Activated CD4-positive, alpha-beta T cell treated with anti-CD3 and anti-CD28 coated beads for 36 hours (primary cell): ENCODE measurements at regions of chr18 and their contacts with region 1.

Region 1: DNA sequence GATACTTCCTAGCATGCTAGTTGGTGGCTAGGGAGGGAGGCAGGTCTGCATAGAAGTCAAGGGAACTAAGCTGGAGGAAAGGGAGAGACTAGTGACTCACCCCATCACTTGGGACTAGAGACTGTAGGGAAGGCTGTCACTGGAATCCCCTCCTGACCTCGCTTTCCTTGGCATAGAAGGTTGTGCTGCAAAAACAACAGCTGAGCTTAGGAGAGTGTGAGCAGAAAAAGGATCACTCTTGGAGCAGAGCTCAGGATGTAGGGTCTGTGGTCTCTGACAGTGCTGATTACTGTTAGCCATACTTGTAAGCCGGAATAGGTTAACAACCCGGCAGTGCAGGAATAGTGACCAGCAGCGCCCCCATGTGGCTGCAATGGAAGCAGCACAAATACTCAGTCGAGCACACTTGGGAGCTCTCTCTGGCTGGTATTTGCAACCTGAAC is 66.9 kb upstream of the SMAD2 start:
- DNase-seq: peak; percentile 71
- ATAC-seq: peak; percentile 39
- H3K4me3 Mint-ChIP-seq: no peak overlapping the region
- H3K27ac Mint-ChIP-seq: no peak overlapping the region
- H3K4me1 Mint-ChIP-seq: no peaks in the 10 kb centered on the region
- H3K27me3 Mint-ChIP-seq: no peaks in the 10 kb centered on the region

Region 2: GRCh38 chr18:47772374-47773248 is 224.7 kb before region 1 on chr18:
- CTCF ChIA-PET with region 1: interaction called, 24 read pairs
- POLR2A ChIA-PET with region 1: interaction called, 4 read pairs
- intact Hi-C with region 1: loop called (anchors 1 to 5 kb)
- DNase-seq: peak; percentile 84
- ATAC-seq: peak; percentile 76
- H3K4me3 Mint-ChIP-seq: no peak overlapping the region
- H3K27ac Mint-ChIP-seq: no peak overlapping the region
- H3K4me1 Mint-ChIP-seq: no peaks in the 10 kb centered on the region
- H3K27me3 Mint-ChIP-seq: peaks cover 2% of the 10 kb centered on the region

Region 3: DNA sequence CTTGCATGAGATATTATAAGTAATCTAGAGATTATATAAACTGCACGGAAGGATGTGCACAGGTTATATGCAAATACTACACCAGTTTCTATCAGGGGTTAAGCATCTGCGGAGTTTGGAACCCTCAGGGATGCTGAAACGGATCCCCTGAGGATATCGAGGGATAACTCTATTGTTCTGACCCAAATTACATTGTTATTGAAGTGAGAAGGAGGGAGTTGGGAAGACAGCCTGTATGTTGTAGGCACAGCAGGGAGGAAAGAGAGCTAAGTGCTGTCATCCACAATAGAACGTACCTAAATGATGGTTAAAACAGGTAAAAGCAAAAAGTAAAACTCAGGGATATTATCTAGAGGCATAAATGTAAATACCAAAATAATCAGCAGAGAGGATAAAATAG is 22.3 kb before region 1 on chr18:
- CTCF ChIA-PET with region 1: no interaction called
- POLR2A ChIA-PET with region 1: no interaction called
- intact Hi-C with region 1: no loop called
- DNase-seq: no peak
- ATAC-seq: no peak
- H3K4me3 Mint-ChIP-seq: no peak overlapping the region
- H3K27ac Mint-ChIP-seq: no peak overlapping the region
- H3K4me1 Mint-ChIP-seq: no peaks in the 10 kb centered on the region
- H3K27me3 Mint-ChIP-seq: peaks cover 3% of the 10 kb centered on the region

Region 4: DNA sequence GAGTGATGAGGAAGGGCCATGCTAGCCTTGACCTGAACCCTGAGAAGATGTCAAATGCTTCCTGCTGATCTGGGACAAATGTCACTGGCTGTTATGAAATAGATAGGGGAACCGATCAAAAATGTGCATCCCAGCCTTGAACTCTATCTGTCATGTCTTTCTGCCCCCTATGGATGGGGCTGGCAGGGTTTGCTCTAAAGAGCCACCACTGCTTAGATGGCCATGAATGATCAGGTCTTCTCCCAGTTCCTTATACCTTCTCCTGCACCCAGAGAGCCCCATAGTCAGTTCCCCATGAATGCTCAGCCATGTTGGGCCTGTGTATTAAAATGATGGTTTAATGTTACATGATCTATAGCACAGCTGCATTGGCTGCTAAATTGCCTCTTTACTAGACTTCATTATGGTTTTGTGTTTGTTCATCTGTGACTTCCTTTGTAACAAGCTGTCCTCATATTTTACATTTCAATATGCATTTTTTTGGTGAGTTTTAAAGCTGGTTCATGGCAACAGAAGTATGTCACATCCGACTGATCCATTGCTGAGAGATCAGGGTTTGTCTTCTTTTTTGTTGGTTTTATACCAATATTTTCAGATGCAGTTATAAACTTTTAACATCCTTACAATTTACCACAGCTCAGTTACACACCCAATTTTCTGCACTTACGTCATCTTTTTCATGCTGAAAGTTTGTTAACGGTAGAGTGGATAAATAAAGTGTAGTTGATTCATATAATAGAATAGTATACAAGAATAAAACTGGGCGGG is 10.6 kb before region 1 on chr18:
- CTCF ChIA-PET with region 1: interaction called, 10 read pairs
- POLR2A ChIA-PET with region 1: no interaction called
- intact Hi-C with region 1: no loop called
- DNase-seq: no peak
- ATAC-seq: no peak
- H3K4me3 Mint-ChIP-seq: no peak overlapping the region
- H3K27ac Mint-ChIP-seq: no peak overlapping the region
- H3K4me1 Mint-ChIP-seq: no peaks in the 10 kb centered on the region
- H3K27me3 Mint-ChIP-seq: no peaks in the 10 kb centered on the region

Region 5: DNA sequence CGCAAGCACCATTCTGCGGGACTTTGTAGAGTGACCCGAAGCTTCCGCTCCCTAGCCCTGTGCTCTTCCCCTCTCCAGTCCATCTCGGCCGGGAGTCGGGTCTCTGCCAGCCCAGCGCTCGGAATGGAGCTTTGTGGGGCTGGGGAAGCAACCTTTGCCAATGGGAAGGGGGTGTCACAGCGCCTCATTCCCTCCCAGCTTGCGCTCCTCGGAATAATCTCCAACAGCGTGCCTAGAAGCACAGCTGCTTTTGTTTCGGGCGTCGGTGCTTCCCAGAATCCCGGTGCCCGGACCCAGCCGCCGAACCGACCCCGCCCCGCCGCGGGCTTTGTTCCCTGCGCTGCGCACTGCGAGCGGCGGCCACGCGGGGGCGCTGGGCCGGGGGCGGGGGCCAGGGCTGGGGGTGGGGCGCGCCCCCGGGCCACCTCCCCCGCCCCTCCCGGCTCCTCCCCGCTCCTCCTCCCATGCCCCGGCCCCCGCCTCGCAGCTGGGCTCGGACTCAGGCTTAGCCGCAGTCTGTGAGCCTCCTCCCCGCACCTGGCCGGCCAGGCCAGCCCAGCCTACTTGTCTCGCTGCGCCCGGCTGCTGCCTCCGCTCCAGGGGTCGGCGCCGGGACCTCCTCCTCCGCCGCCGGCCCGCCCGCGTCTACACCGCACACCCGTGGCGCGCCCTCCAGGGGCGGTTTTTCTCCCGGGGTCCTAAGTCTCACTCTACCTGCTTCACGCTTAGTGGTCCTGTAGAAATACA is 10.8 kb after region 1 on chr18:
- CTCF ChIA-PET with region 1: interaction called, 24 read pairs
- POLR2A ChIA-PET with region 1: no interaction called
- intact Hi-C with region 1: no loop called
- DNase-seq: peak; percentile 66
- ATAC-seq: peak; percentile 85
- H3K4me3 Mint-ChIP-seq: peak overlapping the region; percentile 55
- H3K27ac Mint-ChIP-seq: no peak overlapping the region
- H3K4me1 Mint-ChIP-seq: peaks cover 2% of the 10 kb centered on the region
- H3K27me3 Mint-ChIP-seq: peaks cover 25% of the 10 kb centered on the region